SK-N-SH (cell line): ENCODE measurements at regions of chr12 and their contacts with region 1.

Region 1: GRCh38 chr12:43882578-43883178 is 46.8 kb downstream of the TMEM117 start:
- DNase-seq: peak; percentile 56
- H3K4me3 ChIP-seq: no peak overlapping the region; a peak in 1 of 4 replicates
- H3K27ac ChIP-seq: peak overlapping the region in 1 of 2 experiments; percentile 61; a peak in 1 of 4 replicates
- H3K4me1 ChIP-seq: no peaks in the 10 kb centered on the region; a peak in 1 of 4 replicates
- H3K27me3 ChIP-seq: no peaks in the 10 kb centered on the region
- CTCF ChIP-seq: peak; percentile 91
- EP300 ChIP-seq: no peak
- RAD21 ChIP-seq: peak; percentile 99

Region 2: DNA sequence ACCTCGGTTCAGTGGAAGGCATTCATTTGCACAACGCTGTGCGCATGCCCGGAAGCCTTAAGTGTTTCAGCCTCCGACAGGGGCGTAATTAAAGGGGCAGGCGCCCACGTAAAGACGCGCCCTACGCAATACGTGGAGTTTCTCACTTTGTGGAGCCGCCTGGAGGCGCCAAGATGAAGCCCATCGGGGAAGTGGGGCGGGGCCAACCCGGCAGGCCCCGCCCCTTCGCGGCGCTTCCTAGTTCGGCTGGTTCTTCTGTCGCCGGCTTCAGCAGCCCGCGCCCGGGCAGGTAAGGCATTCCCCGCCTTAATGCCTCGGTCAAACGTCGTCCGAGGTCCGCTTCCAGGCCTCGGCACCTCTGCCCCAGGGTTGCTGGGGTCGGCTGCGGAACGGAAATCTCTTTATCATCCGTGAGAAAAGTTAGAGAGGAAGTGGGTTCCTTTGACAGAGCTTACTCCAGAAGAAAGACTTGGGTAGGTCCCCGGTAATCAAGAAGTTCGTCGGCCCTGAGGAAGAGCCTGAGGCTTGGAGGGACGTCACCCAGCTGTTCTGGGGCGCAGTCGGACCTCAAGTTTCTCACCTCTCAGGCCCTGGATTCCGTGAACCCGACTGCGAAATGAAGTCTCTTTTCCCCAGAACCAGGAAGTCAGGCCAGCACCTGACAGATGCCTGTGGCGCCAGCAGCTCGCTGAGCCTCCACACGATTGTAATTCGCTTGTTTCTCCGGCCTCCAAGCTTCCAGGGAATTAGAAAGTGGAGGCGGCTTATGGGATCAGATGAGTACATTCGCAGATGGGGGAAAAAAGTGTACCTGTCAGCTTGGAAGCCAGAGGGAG is 123.7 kb before region 1 on chr12 and contains the starts of genes IRAK4 and PUS7L:
- CTCF ChIA-PET with region 1: interaction called, 34 read pairs
- POLR2A ChIA-PET with region 1: no interaction called
- DNase-seq: peak; percentile 93
- H3K4me3 ChIP-seq: peak within 1 kb of the TSS; percentile 88 to 89
- H3K27ac ChIP-seq: peak within 1 kb of the TSS; percentile 75 to 78
- H3K4me1 ChIP-seq: peaks cover 6 to 10% of the 10 kb centered on the region in 2 experiments; a peak in 3 of 4 replicates
- H3K27me3 ChIP-seq: no peaks in the 10 kb centered on the region
- CTCF ChIP-seq: peak; percentile 43
- EP300 ChIP-seq: no peak
- RAD21 ChIP-seq: peak; percentile 42
- polyA plus RNA-seq, gene IRAK4: 5.1 and 9.3 TPM in 2 replicates
- polyA plus RNA-seq, gene PUS7L: 1.8 and 2.6 TPM in 2 replicates

Region 3: GRCh38 chr12:43786899-43787693 is 95.6 kb before region 1 on chr12:
- CTCF ChIA-PET with region 1: interaction called, 10 read pairs
- POLR2A ChIA-PET with region 1: no interaction called
- DNase-seq: no peak
- H3K4me3 ChIP-seq: no peak overlapping the region
- H3K27ac ChIP-seq: no peak overlapping the region
- H3K4me1 ChIP-seq: no peaks in the 10 kb centered on the region; a peak in 1 of 4 replicates
- H3K27me3 ChIP-seq: no peaks in the 10 kb centered on the region
- CTCF ChIP-seq: no peak
- EP300 ChIP-seq: no peak
- RAD21 ChIP-seq: no peak

Region 4: DNA sequence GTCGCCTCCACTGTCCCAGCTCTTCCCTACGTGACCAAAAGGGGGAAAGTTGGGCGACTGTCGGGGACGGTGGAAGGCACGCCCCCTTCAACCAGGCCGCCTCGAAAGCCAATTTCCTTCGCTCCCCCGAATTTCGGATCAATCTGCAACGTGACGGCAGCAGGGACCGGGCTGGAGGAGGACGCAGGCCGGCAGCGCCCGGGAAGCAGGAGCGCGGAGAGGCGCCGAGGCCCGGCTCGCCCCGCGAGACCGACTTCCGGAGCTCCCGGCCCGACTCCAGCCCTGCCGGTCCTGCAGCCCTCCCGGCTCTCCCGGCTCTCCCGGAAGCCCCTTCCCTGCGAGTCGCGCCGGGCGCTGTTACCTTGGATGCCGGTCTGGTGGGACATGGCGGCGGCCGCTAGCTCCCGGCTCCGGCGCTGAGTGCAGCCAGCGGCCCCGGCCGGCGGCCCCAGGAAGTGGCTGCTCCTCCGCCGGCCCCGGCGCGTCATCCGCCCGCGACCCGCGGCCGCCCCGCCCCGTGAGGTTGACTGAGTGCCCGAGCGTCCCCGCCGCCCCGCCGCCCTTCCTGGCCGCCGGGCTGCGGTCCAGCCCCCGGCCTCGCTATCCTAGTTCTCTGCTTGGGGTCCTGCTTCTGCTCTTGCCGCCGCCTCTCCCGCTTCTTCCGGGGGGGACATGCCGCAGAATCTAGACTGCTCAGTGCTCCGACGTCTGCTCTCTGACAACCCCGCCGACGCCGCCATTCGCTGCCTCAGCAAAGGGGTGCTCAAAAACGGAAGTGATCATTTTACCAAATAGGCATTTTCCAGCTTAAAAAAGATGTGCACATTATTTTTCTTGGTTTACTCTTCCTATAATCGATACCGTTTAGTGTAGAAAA is 76.6 kb before region 1 on chr12 and contains the start of gene TWF1:
- CTCF ChIA-PET with region 1: interaction called, 22 read pairs
- POLR2A ChIA-PET with region 1: interaction called, 3 read pairs
- DNase-seq: peak; percentile 95
- H3K4me3 ChIP-seq: peak within 1 kb of the TSS; percentile 94 to 96
- H3K27ac ChIP-seq: peak within 1 kb of the TSS; percentile 95 to 98
- H3K4me1 ChIP-seq: peaks cover 0 to 11% of the 10 kb centered on the region in 2 experiments; a peak in 2 of 4 replicates
- H3K27me3 ChIP-seq: no peaks in the 10 kb centered on the region
- CTCF ChIP-seq: peak; percentile 43
- EP300 ChIP-seq: no peak
- RAD21 ChIP-seq: no peak
- polyA plus RNA-seq, gene TWF1: 36.9 and 51.7 TPM in 2 replicates

Region 5: GRCh38 chr12:43914923-43915468 is 32.3 kb after region 1 on chr12:
- CTCF ChIA-PET with region 1: no interaction called
- POLR2A ChIA-PET with region 1: no interaction called
- DNase-seq: no peak
- H3K4me3 ChIP-seq: no peak overlapping the region
- H3K27ac ChIP-seq: no peak overlapping the region
- H3K4me1 ChIP-seq: no peaks in the 10 kb centered on the region; a peak in 1 of 4 replicates
- H3K27me3 ChIP-seq: no peaks in the 10 kb centered on the region
- CTCF ChIP-seq: peak; percentile 38
- EP300 ChIP-seq: no peak
- RAD21 ChIP-seq: peak; percentile 42